A549 (cell line): ENCODE measurements at regions of chr16 and their contacts with region 1.

Region 1: DNA sequence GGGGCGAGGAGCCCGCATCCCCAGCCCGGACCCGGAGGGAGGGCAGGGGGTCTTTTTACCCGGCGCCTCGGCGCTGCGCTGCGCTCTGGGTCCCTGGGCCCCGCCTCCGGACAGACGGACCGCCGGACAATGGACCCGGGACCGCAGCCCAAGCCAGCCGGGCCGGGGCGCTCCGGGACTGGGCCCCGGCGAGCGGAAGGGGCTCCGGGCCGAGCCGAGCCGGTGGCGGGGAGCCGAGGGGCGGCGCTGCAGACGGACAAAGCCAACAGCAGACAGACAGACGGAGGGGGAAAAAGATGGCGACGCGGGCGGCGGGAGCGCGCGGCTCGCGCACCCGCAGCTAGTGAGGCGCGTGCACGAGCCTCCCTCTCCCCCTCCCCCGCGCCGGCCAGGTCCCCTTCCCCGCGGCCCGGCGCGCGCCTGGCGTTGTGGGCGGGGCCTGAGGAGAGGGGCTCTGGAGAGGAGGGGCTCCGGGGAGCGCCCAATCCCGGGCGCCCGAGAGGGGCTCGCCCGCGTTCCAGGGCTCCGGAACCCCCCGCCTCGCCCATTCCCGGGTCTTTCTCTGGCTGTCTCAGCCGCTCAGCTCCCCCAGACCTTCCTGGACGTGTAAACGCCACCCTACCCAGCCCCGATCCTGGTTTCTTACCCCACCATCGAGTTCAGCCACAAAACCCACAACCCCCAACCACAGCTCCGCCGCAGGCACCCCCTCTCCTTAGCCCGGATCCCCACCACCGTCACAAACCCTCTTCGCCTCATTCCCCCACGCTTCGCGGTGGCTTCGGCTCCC is at the start of gene ZNF821:
- DNase-seq: peak; percentile 78 to 85
- ATAC-seq: peak; percentile 72 to 86
- H3K4me3 ChIP-seq: peak within 1 kb of the TSS; percentile 85
- H3K27ac ChIP-seq: peak within 1 kb of the TSS; percentile 84 to 96
- H3K4me1 ChIP-seq: peaks cover 11% of the 10 kb centered on the region
- CTCF ChIP-seq: peak; percentile 39
- EP300 ChIP-seq: no peak
- POLR2A ChIP-seq: peak; percentile 49
- RAD21 ChIP-seq: no peak; a peak in 1 of 5 replicates
- polyA plus RNA-seq, gene ZNF821: 3.6 and 4.5 TPM in 2 replicates

Region 2: DNA sequence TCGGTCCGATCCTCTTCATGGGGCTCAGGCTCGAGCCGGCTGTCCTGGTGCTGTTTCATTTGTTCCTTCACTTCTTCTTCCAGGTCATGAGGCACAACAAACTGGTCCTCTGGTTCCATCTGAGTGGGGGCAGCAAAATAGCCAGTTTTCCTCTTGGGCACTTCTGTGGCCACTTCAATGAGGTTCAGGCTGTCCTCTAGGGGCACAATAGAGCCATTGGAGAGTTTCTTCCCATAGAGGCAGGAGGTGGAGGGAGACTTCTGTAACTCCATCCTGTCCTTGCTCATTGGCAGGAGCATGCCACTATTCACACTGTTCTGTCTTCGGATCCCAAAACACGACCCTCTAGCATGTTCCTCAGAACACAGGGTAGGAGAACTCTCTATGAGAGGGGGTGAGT is 235.1 kb before region 1 on chr16:
- CTCF ChIA-PET with region 1: no interaction called
- POLR2A ChIA-PET with region 1: no interaction called
- DNase-seq: peak; percentile 30 to 35
- ATAC-seq: peak; percentile 79 to 84; a peak in 5 of 6 replicates
- H3K4me3 ChIP-seq: no peak overlapping the region
- H3K27ac ChIP-seq: no peak overlapping the region
- H3K4me1 ChIP-seq: no peaks in the 10 kb centered on the region
- CTCF ChIP-seq: peak; percentile 35
- EP300 ChIP-seq: no peak
- POLR2A ChIP-seq: no peak
- RAD21 ChIP-seq: peak in 1 of 2 experiments; percentile 38; a peak in 1 of 5 replicates

Region 3: DNA sequence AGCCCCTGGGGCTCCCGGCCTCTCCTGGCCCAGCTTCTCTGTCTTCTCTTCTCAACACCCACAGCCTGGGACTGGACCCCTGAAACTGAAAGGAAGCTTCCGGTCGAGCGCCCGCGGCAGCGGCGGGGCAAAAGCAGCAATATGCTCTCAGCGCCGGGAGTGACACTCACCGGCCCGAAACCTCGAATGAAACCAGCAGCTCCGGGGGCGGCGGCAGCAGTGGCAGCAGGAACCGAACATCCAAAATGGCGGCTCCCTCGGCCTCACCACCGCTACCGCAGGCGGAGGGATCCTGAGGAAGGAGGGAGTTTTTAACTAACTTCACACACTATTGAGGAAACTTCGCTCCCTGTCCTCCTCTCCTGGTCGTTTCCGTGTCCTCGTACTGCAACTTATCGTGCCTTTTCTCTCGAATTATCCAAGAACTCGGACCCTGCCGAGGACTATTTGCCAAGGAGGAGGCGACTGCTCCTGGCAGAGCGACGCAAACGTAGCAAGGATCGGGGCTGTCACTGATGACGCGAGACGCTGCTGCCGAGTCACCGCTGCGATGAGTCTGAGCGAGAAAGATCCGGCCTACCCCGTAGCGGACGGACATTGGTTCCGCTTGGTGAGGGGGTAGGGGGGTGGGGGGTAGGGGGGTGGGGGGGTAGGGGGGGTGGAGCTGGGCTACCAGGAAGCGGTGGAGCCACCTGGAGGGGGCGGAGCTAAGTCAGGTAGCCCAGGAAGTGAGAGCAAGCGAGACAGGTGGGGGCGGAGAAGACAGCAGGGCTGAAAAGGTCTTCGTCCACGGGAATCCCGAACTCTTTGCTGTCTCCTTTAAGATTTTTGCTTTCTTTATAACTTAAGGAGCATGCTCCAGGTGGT is 75.2 kb before region 1 on chr16 and contains the start of gene AP1G1:
- CTCF ChIA-PET with region 1: interaction called, 11 read pairs
- POLR2A ChIA-PET with region 1: interaction called, 7 read pairs
- DNase-seq: peak; percentile 98 to 99
- ATAC-seq: peak; percentile 98
- H3K4me3 ChIP-seq: peak within 1 kb of the TSS; percentile 91
- H3K27ac ChIP-seq: peak within 1 kb of the TSS; percentile 96 to 99
- H3K4me1 ChIP-seq: peaks cover 20% of the 10 kb centered on the region
- CTCF ChIP-seq: no peak
- EP300 ChIP-seq: no peak
- POLR2A ChIP-seq: peak; percentile 45
- RAD21 ChIP-seq: no peak
- polyA plus RNA-seq, gene AP1G1: 85.6 and 98.0 TPM in 2 replicates

Region 4: DNA sequence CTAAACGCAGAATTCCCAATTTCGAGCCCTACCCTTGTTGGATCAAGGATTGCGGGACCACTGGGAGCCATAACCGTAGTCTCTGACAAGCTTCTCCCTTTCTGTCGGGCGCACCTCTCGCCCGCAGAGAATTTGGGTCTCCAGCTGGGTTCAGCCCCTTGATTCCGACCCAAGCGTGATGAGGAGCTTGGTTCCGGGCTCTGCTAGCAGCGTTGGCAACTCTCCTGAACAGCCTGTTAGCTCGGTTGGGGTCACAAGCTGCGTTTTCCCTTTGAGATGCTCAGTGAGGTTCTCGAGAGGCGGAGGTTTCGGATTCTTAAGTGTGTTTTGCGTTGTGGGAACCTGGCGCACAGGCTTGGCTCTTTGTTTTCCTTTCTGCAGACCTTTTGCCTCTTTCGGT is 37.6 kb before region 1 on chr16:
- CTCF ChIA-PET with region 1: interaction called, 11 read pairs
- POLR2A ChIA-PET with region 1: no interaction called
- DNase-seq: no peak
- ATAC-seq: peak in 1 of 2 experiments; percentile 11; a peak in 2 of 6 replicates
- H3K4me3 ChIP-seq: peak overlapping the region; percentile 99
- H3K27ac ChIP-seq: peak overlapping the region; percentile 96 to 99
- H3K4me1 ChIP-seq: peaks cover 7% of the 10 kb centered on the region
- CTCF ChIP-seq: no peak
- EP300 ChIP-seq: no peak
- POLR2A ChIP-seq: no peak
- RAD21 ChIP-seq: no peak

Region 5: DNA sequence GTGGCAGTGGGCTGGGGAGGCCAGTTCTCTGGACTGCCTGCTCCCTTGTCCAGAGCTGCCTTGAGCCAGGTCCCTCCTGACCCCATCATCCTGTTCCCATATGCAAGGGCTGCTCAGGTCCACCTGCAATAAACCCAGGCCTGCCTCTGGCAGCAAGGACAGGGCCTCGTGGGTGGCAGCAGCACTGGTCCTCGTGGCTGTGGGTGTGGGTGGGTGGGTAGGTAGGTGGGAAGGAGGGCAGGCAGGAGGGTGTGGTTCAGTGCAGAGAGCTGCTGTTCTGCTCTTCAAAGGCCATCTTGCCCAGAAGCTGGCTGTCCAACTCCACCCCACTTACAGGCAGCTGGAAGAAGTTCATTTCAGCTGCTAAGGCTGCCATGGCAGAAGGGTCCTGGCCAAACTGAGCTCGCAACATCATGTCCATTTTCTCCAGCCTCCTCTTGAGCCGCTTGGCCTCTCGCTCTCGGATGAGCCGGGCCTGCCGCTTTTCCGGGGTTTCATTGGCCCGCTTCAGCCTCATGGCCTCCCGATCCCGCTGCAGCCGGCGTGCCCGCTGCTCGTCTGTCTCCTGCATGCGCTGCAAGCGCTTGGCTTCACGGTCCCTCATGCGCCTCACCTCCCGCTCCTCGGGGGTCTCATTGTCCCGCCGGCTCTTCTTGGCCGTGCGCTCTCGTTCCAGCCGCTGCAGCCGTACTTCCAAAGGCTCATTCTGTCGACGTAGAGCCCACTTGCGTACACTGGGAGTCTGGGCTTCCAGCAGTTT is 24.1 kb before region 1 on chr16:
- CTCF ChIA-PET with region 1: interaction called, 30 read pairs
- POLR2A ChIA-PET with region 1: no interaction called
- DNase-seq: no peak
- ATAC-seq: no peak; a peak in 1 of 6 replicates
- H3K4me3 ChIP-seq: no peak overlapping the region
- H3K27ac ChIP-seq: no peak overlapping the region
- H3K4me1 ChIP-seq: peaks cover 9% of the 10 kb centered on the region; the same call in 1 of the 3 replicates
- CTCF ChIP-seq: no peak
- EP300 ChIP-seq: no peak
- POLR2A ChIP-seq: no peak
- RAD21 ChIP-seq: no peak

Region 6: DNA sequence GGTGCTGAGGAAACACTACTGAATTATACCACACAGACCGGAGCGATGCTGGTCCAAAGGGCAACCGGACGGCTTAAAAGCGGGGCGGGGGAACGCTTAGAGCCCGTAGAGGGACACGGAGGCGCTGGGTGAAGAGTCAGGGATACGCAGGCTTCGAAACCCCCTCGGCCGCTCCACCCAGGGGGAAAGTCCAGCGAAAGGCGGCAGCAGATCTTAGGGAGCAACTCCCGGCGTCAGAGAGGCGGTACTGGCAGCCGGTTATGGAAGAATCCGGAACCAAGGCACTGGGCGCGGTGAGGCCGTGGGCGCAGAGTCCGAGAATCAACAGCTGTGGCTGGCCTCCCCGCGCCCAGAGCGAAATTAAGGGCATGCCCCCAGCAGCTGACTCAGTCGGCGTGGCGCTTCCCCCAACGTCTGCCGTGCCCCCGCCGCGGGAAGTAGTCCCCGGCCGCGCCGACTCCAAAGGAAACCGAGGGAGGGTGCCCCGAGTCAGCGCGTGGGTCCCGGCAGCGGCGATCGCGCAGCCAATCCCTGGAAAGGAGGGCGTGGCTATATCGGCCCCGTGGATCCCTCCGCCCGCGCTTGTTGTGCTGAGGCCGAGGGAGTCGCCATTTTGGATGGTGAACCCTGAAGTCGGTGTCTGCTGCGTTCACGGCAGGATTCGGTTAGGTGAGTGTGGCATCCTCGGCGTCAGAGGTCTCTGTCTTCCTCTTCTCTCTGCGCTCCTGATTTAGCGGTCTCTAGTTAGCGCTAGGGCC is 11.1 kb after region 1 on chr16 and contains the start of gene IST1:
- CTCF ChIA-PET with region 1: interaction called, 71 read pairs
- POLR2A ChIA-PET with region 1: interaction called, 18 read pairs
- DNase-seq: peak; percentile 97 to 99
- ATAC-seq: peak; percentile 92
- H3K4me3 ChIP-seq: peak within 1 kb of the TSS; percentile 78
- H3K27ac ChIP-seq: peak within 1 kb of the TSS; percentile 92 to 96
- H3K4me1 ChIP-seq: peaks cover 23% of the 10 kb centered on the region; the same call in 2 of the 3 replicates
- CTCF ChIP-seq: no peak
- EP300 ChIP-seq: 0 out of 5 replicates have a peak, but pooled peaks of 1 of the 2 experiments have one; percentile 21
- POLR2A ChIP-seq: peak; percentile 69
- RAD21 ChIP-seq: no peak
- polyA plus RNA-seq, gene IST1: 290 and 297 TPM in 2 replicates

Region 7: DNA sequence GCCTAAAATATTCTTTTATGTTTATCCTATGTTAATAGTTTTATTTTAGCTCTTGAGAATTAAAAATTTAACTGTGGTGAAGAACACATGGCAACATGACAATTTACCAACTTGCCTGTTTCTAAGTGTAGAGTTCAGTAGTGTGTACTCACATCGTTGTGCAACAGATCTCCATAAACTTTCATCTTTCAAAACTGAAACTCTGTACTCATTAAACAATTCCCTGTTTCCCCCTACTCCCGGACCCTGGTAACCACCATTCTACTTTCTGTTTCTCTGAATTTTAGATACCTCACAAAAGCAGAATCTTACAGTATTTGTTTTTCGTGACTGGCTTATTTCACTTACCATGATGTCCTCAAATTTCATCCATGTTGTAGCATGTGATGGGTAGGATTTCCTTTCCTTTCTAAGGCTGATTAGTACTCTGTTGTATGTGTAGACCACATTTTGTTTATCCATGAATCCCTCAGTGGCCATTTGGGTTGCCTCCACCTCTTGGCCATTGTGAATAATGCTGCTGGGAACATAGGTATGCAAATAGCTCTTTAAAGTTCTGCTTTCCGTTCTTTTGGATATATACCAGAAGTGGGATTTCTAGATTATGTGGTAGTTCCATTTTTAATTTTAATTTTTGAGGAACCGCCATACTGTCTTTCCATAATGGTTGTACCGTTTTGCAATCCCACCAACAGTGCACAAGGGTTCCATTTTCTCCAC is 28.6 kb after region 1 on chr16:
- CTCF ChIA-PET with region 1: no interaction called
- POLR2A ChIA-PET with region 1: no interaction called
- DNase-seq: no peak
- ATAC-seq: no peak
- H3K4me3 ChIP-seq: no peak overlapping the region
- H3K27ac ChIP-seq: no peak overlapping the region
- H3K4me1 ChIP-seq: no peaks in the 10 kb centered on the region
- CTCF ChIP-seq: no peak
- EP300 ChIP-seq: no peak
- POLR2A ChIP-seq: no peak
- RAD21 ChIP-seq: no peak